ENCODE measurements at regions of chr3 and their contacts with region 1.

Region 1: GRCh38 chr3:55485211-55485791 is 1.8 kb downstream of the WNT5A start:
- ATAC-seq: peak; percentile 13 to 71 (median 62)
- H3K4me3 ChIP-seq: peak overlapping the region; percentile 45 to 81 (median 48)
- H3K27ac ChIP-seq: peak overlapping the region in 1 of 2 donors; percentile 4
- H3K4me1 ChIP-seq: peaks cover 9 to 24% of the 10 kb centered on the region in 2 donors

Region 2: GRCh38 chr3:54853573-54854404 is 631.5 kb before region 1 on chr3:
- in situ Hi-C with region 1: loop called in 3 of 9 experiments (anchors 25 kb)
- ATAC-seq: peak; percentile 89 to 98 (median 95)
- H3K4me3 ChIP-seq: no peak overlapping the region
- H3K27ac ChIP-seq: no peak overlapping the region
- H3K4me1 ChIP-seq: peaks cover 13 to 22% of the 10 kb centered on the region in 2 donors

Region 3: GRCh38 chr3:55721716-55722484 is 236.6 kb after region 1 on chr3:
- in situ Hi-C with region 1: loop called in 2 of 9 experiments (anchors 25 kb)
- ATAC-seq: peak in 3 of 8 experiments; percentile 26 to 63 (median 51)
- H3K4me3 ChIP-seq: no peak overlapping the region
- H3K27ac ChIP-seq: no peak overlapping the region
- H3K4me1 ChIP-seq: peaks cover 0 to 2% of the 10 kb centered on the region in 2 donors

Region 4: DNA sequence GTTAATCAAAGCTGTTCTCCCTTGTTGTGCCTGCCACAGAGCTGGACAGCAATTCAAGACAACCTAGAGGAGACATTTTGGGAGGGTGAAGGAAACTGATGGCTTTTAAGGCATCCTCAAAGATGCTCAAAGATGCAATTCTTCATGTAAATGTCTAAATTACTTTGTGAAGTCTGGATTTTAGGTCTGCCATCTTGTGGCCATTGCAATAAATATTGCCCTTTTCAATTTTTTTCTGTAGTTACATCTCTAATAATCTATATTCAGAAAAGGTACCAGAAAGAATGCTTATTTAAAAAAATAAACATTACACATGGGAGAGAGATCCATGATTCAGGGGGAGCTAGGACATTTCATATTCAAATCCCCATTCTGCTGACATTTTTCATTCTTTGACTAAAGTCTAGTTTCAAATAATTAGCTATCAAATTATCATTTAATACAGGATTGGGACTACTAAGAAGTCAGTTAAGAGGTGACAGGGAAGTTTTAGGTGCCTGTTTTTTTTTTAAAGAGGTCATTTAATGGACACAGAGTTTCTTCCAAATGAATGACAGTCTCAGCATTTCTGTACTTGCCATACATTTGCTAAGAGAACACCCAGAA is 261.6 kb after region 1 on chr3:
- in situ Hi-C with region 1: loop called in 1 of 9 experiments (anchors 25 kb)
- ATAC-seq: no peak
- H3K4me3 ChIP-seq: no peak overlapping the region
- H3K27ac ChIP-seq: no peak overlapping the region
- H3K4me1 ChIP-seq: peaks cover 0 to 5% of the 10 kb centered on the region in 2 donors

Region 5: DNA sequence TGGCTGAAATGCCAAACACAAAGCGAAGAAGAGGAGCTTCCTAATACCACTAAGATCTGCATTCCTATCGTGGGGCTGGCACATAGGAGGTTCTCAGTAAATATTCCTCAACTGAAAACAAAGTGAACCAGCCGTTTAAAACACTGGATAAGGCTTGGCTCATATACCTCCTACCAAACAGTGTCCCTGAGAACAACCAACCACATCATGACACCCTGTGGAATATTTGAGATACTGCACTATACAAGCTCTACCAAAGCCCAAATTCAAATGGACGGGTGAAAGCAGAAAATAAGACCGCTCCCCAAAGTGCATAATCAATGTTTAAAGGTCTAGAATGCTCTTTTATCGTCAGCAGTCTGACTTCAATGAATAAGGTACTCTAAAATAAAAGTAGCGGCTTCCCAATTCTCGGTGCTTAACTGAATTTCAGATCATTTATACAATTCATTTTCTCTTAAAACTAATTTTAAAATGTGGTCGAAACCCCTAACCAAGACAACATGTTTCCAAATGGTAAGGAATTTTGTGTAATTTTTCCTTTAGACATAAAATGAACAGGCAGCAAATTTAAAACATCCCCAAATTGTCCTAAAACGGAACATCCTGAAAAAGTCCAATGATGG is 557.1 kb after region 1 on chr3:
- in situ Hi-C with region 1: loop called in 2 of 9 experiments (anchors 25 kb)
- ATAC-seq: peak; percentile 52 to 99 (median 76)
- H3K4me3 ChIP-seq: no peak overlapping the region
- H3K27ac ChIP-seq: no peak overlapping the region
- H3K4me1 ChIP-seq: no peaks in the 10 kb centered on the region

Region 6: GRCh38 chr3:56251343-56251945 is 766.1 kb after region 1 on chr3:
- in situ Hi-C with region 1: loop called in 3 of 9 experiments (anchors 25 kb)
- ATAC-seq: peak in 6 of 8 experiments; percentile 23 to 73 (median 52)
- H3K4me3 ChIP-seq: no peak overlapping the region
- H3K27ac ChIP-seq: no peak overlapping the region
- H3K4me1 ChIP-seq: no peaks in the 10 kb centered on the region

Measured in motor neuron (in vitro differentiated cells).